HCT116 (cell line): ENCODE measurements at regions of chr6 and their contacts with region 1.

Region 1: DNA sequence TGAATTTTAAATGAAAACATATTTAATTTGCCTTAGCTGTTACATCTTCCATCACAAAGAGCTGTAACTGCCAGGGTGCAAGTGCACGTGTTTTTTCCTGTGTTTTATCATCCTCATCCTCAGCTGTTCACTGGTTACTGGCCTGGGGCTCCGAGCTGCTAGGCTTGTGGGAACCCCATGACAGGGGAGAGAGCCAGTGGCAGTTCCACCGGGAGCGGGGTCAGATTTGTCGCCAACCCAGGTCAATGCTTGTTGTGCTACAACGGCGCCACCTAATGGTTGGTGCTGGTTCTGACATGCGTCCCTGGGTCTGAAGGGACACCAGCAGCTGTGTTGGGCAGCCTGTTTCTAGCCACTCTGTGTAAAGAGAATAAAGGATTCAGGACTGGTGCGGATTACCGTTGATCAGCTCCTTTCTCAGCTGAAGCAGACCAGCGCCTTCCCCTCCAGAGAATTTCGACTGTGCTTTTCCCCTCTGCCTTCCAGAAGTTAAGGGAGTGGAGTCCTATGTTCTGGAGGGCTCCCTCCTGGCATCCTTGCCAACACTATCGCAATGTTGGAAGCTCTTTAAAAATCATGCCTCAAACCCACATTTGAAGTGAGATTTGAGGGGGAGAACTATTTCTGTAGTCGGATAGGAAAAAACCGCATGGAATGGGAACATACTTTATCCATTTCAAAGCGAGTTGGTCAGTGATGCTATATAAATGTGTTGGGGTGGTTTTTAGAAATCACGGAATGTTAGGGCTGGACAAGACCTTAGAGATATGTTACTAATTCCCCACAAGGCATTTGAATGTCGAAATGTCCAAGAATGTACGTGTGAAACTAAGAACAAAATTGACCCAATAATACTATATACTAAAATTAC is 32.1 kb downstream of the SUMO4 start:
- DNase-seq: peak; percentile 76
- ATAC-seq: peak; percentile 99
- H3K4me3 ChIP-seq: no peak overlapping the region
- H3K27ac ChIP-seq: no peak overlapping the region
- H3K4me1 ChIP-seq: peaks cover 0 to 7% of the 10 kb centered on the region in 2 experiments; a peak in 2 of 4 replicates
- H3K27me3 ChIP-seq: no peaks in the 10 kb centered on the region
- CTCF ChIP-seq: peak; percentile 85 to 95 (median 93)
- POLR2A ChIP-seq: no peak
- RAD21 ChIP-seq: peak; percentile 100

Region 2: GRCh38 chr6:148559848-148560433 is 872.2 kb before region 1 on chr6:
- CTCF ChIA-PET with region 1: no interaction called
- POLR2A ChIA-PET with region 1: no interaction called
- RAD21 ChIA-PET with region 1: no interaction called
- intact Hi-C with region 1: loop called (anchors 2 kb)
- DNase-seq: peak; percentile 26
- ATAC-seq: peak; percentile 97
- H3K4me3 ChIP-seq: peak overlapping the region; percentile 23 to 54
- H3K27ac ChIP-seq: no peak overlapping the region
- H3K4me1 ChIP-seq: peaks cover 0 to 6% of the 10 kb centered on the region in 2 experiments; a peak in 2 of 4 replicates
- H3K27me3 ChIP-seq: no peaks in the 10 kb centered on the region
- CTCF ChIP-seq: peak; percentile 84 to 94 (median 94)
- POLR2A ChIP-seq: no peak
- RAD21 ChIP-seq: peak; percentile 88

Region 3: DNA sequence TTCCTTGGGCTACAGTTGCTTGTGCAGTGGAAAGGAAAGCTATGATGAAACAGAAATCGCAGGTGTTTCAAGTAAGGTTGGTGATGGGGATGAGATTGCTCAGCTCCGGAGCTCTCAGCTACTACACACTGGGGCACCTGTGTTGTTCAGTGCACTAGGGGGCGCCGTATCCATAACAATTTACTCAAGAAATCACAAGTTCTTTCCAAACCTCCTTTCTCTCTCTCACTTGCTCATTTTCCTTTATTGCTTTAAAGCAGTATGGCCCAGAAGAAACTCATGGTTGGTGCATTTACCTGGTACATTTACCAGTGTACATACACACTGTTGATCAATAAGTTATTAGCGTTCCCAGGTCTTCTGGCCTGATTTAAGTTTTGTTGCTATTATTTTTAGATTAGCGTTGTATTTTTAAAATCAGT is 349.8 kb before region 1 on chr6:
- CTCF ChIA-PET with region 1: interaction called, 46 read pairs
- POLR2A ChIA-PET with region 1: interaction called, 3 read pairs
- RAD21 ChIA-PET with region 1: interaction called, 15 to 25 read pairs
- intact Hi-C with region 1: loop called (anchors 1 kb)
- DNase-seq: peak; percentile 57
- ATAC-seq: peak; percentile 97
- H3K4me3 ChIP-seq: no peak overlapping the region
- H3K27ac ChIP-seq: no peak overlapping the region
- H3K4me1 ChIP-seq: no peaks in the 10 kb centered on the region; a peak in 1 of 4 replicates
- H3K27me3 ChIP-seq: no peaks in the 10 kb centered on the region
- CTCF ChIP-seq: peak; percentile 68 to 84 (median 79); a peak in 5 of 6 replicates
- POLR2A ChIP-seq: no peak
- RAD21 ChIP-seq: peak; percentile 95

Region 4: GRCh38 chr6:149513915-149514314 is 81.8 kb after region 1 on chr6:
- CTCF ChIA-PET with region 1: interaction called, 5 read pairs
- POLR2A ChIA-PET with region 1: no interaction called
- RAD21 ChIA-PET with region 1: no interaction called
- intact Hi-C with region 1: loop called (anchors 5 kb)
- DNase-seq: no peak
- ATAC-seq: no peak
- H3K4me3 ChIP-seq: no peak overlapping the region
- H3K27ac ChIP-seq: no peak overlapping the region
- H3K4me1 ChIP-seq: no peaks in the 10 kb centered on the region
- H3K27me3 ChIP-seq: no peaks in the 10 kb centered on the region
- CTCF ChIP-seq: no peak
- POLR2A ChIP-seq: no peak
- RAD21 ChIP-seq: no peak

Region 5: DNA sequence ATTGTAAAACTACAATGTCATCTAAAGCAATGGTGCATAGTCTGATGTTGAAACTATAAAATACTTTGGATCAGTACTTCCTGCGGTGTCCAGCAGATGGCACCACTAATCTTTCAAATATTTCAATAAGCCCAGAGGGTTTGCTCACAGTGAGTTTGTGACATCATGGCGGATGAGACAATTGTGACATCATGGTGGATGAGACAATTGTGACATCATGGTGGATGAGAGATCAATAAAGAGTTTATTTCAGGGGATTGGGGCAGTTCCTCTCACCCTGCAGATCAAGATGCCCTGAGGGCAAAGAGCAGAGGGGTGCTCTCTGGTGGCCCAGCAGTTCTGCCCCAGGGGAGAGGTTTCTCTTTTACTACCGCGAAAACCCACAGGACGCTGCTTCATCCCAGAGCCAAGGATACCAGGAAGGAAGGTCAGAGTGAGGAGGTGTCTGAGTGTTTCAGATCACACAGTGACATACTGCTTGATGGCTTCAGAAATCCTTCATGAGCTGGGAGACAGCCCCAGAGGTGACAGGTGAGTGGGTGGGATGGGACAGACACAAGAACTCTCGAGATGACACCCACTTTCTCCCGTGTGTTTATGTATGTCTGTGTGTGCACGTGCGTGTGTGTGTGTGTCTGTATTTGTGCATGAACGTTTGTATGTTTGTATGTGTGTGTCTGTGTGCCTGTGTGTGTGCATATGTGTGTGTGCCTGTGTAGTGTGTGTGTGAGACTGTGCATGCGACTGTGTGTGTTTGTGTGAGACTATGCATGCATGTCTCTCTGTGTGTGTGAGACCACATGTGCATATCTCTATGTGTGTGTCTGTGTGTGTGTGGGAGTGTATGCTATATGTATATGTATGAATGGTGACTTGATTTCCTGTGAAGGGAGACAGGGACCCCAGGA is 502.4 kb after region 1 on chr6:
- CTCF ChIA-PET with region 1: no interaction called
- POLR2A ChIA-PET with region 1: no interaction called
- RAD21 ChIA-PET with region 1: no interaction called
- intact Hi-C with region 1: no loop called
- DNase-seq: peak; percentile 76
- ATAC-seq: peak; percentile 67
- H3K4me3 ChIP-seq: no peak overlapping the region
- H3K27ac ChIP-seq: no peak overlapping the region
- H3K4me1 ChIP-seq: peaks cover 0 to 3% of the 10 kb centered on the region in 2 experiments; a peak in 1 of 4 replicates
- H3K27me3 ChIP-seq: no peaks in the 10 kb centered on the region
- CTCF ChIP-seq: peak; percentile 63 to 88 (median 87)
- POLR2A ChIP-seq: no peak
- RAD21 ChIP-seq: peak; percentile 96